ENCODE measurements at regions of chr7 and their contacts with region 1.

Region 1: GRCh38 chr7:66204822-66205740 is at the start of gene TPST1:
- DNase-seq: peak; percentile 92 to 97
- H3K4me3 ChIP-seq: peak within 1 kb of the TSS; percentile 89
- H3K4me3 Mint-ChIP-seq: peak within 1 kb of the TSS; percentile 80
- H3K27ac Mint-ChIP-seq: peak within 1 kb of the TSS; percentile 75
- H3K4me1 ChIP-seq: peaks cover 5% of the 10 kb centered on the region
- H3K4me1 Mint-ChIP-seq: peaks cover 12% of the 10 kb centered on the region
- H3K27me3 ChIP-seq: no peaks in the 10 kb centered on the region
- H3K27me3 Mint-ChIP-seq: no peaks in the 10 kb centered on the region
- CTCF ChIP-seq: peak; percentile 48 to 80
- total RNA-seq, gene TPST1: 31.0 and 32.8 TPM in 2 replicates

Region 2: DNA sequence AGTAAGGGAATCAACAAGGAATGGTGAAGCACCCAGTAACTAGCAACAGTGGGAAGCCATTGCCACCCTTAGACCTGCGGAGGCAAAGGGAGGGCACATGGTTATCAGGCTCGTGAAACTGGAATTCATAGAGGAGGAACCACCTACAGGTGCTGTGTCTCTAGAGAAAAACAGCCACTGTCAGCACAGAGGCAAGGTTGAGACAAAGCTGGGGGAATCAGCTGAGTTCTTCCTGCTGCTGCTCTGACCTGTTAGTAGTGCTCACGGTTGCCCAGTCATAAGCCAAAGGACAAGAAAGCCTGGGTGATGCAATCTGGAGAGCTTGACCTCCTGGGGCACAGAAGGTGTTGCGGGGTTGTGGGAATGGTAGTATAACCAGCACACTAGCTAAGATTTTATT is 110.1 kb after region 1 on chr7:
- CTCF ChIA-PET with region 1: interaction called, 3 read pairs
- POLR2A ChIA-PET with region 1: no interaction called
- intact Hi-C with region 1: loop called (anchors 10 kb)
- DNase-seq: no peak
- H3K4me3 ChIP-seq: no peak overlapping the region
- H3K4me3 Mint-ChIP-seq: no peak overlapping the region
- H3K27ac Mint-ChIP-seq: peak overlapping the region; percentile 7
- H3K4me1 ChIP-seq: peaks cover 3% of the 10 kb centered on the region; the same call in 1 of the 2 replicates
- H3K4me1 Mint-ChIP-seq: peaks cover 10% of the 10 kb centered on the region
- H3K27me3 ChIP-seq: no peaks in the 10 kb centered on the region
- H3K27me3 Mint-ChIP-seq: no peaks in the 10 kb centered on the region
- CTCF ChIP-seq: no peak

Region 3: DNA sequence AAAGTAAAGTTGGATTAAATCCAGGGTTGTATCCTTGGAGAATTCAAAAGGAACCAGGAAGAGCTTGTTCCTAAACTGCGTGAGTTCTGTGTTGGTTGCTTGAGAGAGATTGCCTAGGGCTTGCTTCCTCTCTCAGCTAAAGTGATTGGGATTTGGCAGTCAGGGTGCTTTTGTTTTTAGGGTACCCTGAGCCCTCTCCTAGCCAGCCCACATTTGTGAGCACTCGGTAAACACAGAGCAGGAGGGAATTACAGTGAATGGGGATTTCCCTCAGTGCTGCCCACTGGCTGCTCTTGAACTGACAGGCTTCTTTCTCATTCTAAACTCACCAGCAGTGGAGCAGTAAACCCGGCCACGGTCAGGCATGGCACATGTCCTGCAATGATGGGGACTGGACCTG is 147.0 kb after region 1 on chr7:
- CTCF ChIA-PET with region 1: interaction called, 5 read pairs
- POLR2A ChIA-PET with region 1: no interaction called
- intact Hi-C with region 1: loop called (anchors 10 kb)
- DNase-seq: no peak
- H3K4me3 ChIP-seq: no peak overlapping the region
- H3K4me3 Mint-ChIP-seq: no peak overlapping the region
- H3K27ac Mint-ChIP-seq: no peak overlapping the region
- H3K4me1 ChIP-seq: peaks cover 19% of the 10 kb centered on the region
- H3K4me1 Mint-ChIP-seq: peaks cover 7% of the 10 kb centered on the region
- H3K27me3 ChIP-seq: no peaks in the 10 kb centered on the region
- H3K27me3 Mint-ChIP-seq: no peaks in the 10 kb centered on the region
- CTCF ChIP-seq: no peak

Region 4: DNA sequence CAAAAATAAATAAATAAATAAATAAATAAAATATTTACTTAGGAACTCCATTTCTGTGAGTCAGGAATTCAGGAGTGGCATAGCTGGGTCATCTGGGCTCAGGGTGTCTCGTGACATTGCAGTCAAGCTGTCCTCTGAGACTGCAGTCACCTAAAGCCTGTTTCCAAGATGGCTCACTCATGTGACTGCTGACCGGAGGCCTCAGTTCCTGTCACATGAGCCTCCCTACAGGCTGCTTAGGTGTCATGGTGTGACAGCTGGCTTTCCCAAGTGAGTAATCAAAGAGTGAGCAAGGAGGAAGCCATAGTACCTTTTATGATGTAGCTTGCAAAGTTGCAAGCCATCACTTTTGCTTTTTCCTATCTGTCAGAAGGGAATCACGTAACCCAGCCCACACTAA is 295.0 kb after region 1 on chr7:
- CTCF ChIA-PET with region 1: no interaction called
- POLR2A ChIA-PET with region 1: no interaction called
- intact Hi-C with region 1: no loop called
- DNase-seq: peak in 1 of 2 experiments; percentile 30
- H3K4me3 ChIP-seq: no peak overlapping the region
- H3K4me3 Mint-ChIP-seq: no peak overlapping the region
- H3K27ac Mint-ChIP-seq: no peak overlapping the region
- H3K4me1 ChIP-seq: no peaks in the 10 kb centered on the region
- H3K4me1 Mint-ChIP-seq: peaks cover 6% of the 10 kb centered on the region
- H3K27me3 ChIP-seq: no peaks in the 10 kb centered on the region
- H3K27me3 Mint-ChIP-seq: no peaks in the 10 kb centered on the region
- CTCF ChIP-seq: no peak

Measured in Caco-2 (cell line).